ENCODE measurements at regions of chr7 and their contacts with region 1.

Region 1: DNA sequence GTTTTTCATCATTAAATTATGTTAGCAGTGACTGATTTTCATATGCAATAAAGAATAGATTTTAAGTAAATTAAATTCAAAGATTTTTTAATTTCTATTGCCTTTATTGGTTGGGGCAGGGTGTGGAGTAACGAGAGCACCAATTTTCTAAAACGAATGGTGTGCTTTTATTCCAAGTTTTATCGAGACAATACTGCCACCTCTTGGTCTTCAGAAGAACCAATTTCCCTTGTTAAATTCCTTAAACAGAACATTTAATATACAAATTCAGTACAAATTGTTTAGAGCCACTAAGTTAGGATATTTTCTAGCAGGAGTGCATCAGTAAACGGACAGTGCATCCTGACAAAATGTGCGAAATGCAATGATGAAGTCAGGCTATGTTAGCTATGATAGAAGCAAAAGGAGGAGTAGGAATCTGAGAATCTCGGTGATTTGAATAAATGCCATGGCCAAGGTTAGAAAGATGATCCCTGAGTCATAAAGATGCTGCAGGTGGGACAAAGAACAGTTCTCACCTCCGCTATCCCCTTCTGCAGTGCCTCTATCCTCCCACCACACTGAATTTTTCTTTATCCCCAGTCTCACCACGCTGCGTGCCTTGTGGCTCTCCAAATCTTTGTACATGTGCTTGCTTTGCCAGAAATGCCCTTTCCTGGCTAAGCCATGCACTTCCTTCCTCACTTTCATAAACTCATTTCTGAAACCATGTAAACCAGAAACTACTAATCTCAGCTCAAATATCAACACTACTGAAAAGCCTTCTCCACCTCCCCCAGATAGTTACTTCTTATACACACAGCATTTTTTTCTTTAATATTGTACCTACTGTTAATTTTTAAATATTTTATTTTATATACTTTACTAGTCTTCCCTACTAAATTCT is 31.9 kb upstream of the AGBL3 start:
- DNase-seq: peak; percentile 15
- ATAC-seq: peak; percentile 83
- H3K4me3 ChIP-seq: no peak overlapping the region
- H3K27ac ChIP-seq: no peak overlapping the region
- H3K4me1 ChIP-seq: no peaks in the 10 kb centered on the region; the same call in 1 of the 2 replicates
- H3K27me3 ChIP-seq: no peaks in the 10 kb centered on the region
- CTCF ChIP-seq: peak; percentile 49 to 64 (median 58)
- EP300 ChIP-seq: no peak
- POLR2A ChIP-seq: no peak
- RAD21 ChIP-seq: peak; percentile 72

Region 2: GRCh38 chr7:134502463-134503371 is 451.7 kb before region 1 on chr7:
- CTCF ChIA-PET with region 1: no interaction called
- POLR2A ChIA-PET with region 1: no interaction called
- RAD21 ChIA-PET with region 1: no interaction called
- SMC1A ChIA-PET with region 1: no interaction called
- in situ Hi-C with region 1: no loop called
- intact Hi-C with region 1: no loop called
- DNase-seq: no peak
- ATAC-seq: no peak
- H3K4me3 ChIP-seq: no peak overlapping the region
- H3K27ac ChIP-seq: no peak overlapping the region
- H3K4me1 ChIP-seq: no peaks in the 10 kb centered on the region
- H3K27me3 ChIP-seq: no peaks in the 10 kb centered on the region; a peak in 1 of 4 replicates
- CTCF ChIP-seq: no peak
- EP300 ChIP-seq: no peak
- POLR2A ChIP-seq: no peak
- RAD21 ChIP-seq: no peak

Region 3: DNA sequence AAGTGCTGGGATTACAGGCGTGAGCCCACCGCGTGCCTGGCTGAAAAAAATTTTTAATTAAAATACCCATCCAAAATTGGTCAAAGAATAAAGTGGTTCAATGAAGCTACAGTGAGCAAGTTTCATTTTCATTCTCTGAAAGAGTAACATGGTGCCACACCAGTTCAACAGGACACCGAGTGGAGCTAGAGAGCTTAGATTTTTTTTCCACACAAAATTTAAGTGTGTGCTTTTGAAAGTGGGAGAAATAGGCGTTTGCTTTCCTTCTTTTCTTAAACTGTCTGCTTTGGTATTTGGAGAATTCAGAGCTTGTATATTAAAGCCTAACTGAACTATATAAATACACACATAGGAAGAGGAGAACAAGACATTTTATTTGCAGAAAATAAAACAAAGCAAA is 264.4 kb before region 1 on chr7:
- CTCF ChIA-PET with region 1: interaction called, 10 read pairs
- POLR2A ChIA-PET with region 1: no interaction called
- RAD21 ChIA-PET with region 1: interaction called, 5 read pairs
- SMC1A ChIA-PET with region 1: interaction called, 6 read pairs
- in situ Hi-C with region 1: no loop called
- intact Hi-C with region 1: no loop called
- DNase-seq: no peak
- ATAC-seq: peak; percentile 75
- H3K4me3 ChIP-seq: no peak overlapping the region
- H3K27ac ChIP-seq: no peak overlapping the region
- H3K4me1 ChIP-seq: no peaks in the 10 kb centered on the region
- H3K27me3 ChIP-seq: peaks cover 0 to 2% of the 10 kb centered on the region in 2 experiments; a peak in 1 of 4 replicates
- CTCF ChIP-seq: peak in 1 of 3 experiments; percentile 10; a peak in 1 of 6 replicates
- EP300 ChIP-seq: no peak
- POLR2A ChIP-seq: no peak
- RAD21 ChIP-seq: peak; percentile 41

Region 4: DNA sequence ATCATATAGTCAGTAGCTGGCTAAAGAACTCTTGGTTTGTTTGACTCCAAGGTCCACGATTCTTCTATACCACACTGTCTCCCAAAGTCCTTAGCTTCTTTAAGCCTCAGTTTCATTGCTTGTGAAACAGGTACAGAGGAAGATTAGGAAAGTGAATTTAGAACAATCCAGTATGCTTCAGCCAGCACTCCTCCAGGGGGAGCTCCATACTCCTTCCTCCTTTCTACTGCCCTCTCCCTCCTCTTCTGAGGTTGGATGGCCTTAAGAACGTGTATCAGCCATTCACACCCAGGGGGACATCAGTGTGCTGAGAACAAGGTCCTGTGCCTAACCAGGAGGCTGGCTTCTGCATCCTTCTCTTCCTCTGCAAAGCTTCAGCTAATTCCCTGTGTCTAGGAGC is 229.8 kb before region 1 on chr7:
- CTCF ChIA-PET with region 1: interaction called, 23 read pairs
- POLR2A ChIA-PET with region 1: no interaction called
- RAD21 ChIA-PET with region 1: interaction called, 7 read pairs
- SMC1A ChIA-PET with region 1: interaction called, 4 read pairs
- in situ Hi-C with region 1: no loop called
- intact Hi-C with region 1: no loop called
- DNase-seq: peak; percentile 11
- ATAC-seq: peak; percentile 85
- H3K4me3 ChIP-seq: no peak overlapping the region
- H3K27ac ChIP-seq: no peak overlapping the region
- H3K4me1 ChIP-seq: no peaks in the 10 kb centered on the region
- H3K27me3 ChIP-seq: no peaks in the 10 kb centered on the region; a peak in 1 of 4 replicates
- CTCF ChIP-seq: peak; percentile 48 to 59 (median 52); a peak in 5 of 6 replicates
- EP300 ChIP-seq: no peak
- POLR2A ChIP-seq: no peak
- RAD21 ChIP-seq: peak; percentile 52

Region 5: GRCh38 chr7:134823400-134823799 is 131.0 kb before region 1 on chr7:
- CTCF ChIA-PET with region 1: no interaction called
- POLR2A ChIA-PET with region 1: no interaction called
- RAD21 ChIA-PET with region 1: no interaction called
- SMC1A ChIA-PET with region 1: no interaction called
- in situ Hi-C with region 1: no loop called
- intact Hi-C with region 1: no loop called
- DNase-seq: no peak
- ATAC-seq: no peak
- H3K4me3 ChIP-seq: no peak overlapping the region
- H3K27ac ChIP-seq: no peak overlapping the region
- H3K4me1 ChIP-seq: no peaks in the 10 kb centered on the region
- H3K27me3 ChIP-seq: no peaks in the 10 kb centered on the region
- CTCF ChIP-seq: no peak
- EP300 ChIP-seq: no peak
- POLR2A ChIP-seq: no peak
- RAD21 ChIP-seq: no peak

Region 6: DNA sequence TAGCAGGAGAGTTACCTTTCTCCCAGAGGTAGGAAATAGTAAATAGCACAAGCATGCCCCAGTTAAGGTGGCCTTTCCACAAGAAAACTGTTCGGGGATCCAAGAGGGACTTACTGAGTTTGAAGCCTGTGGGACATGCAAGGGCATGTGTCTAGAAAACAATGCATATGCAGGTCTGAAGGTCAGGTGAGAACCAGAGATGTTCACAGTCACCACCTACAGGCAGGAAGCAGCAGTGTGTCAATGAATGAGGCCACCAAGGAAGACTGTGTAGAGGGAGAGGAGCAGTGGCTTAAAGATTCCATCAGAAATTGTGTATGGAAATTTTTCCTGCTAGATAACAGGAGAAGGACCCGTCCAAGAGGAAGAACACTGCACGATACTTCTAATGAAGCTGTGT is 109.0 kb before region 1 on chr7:
- CTCF ChIA-PET with region 1: no interaction called
- POLR2A ChIA-PET with region 1: no interaction called
- RAD21 ChIA-PET with region 1: no interaction called
- SMC1A ChIA-PET with region 1: no interaction called
- in situ Hi-C with region 1: no loop called
- intact Hi-C with region 1: no loop called
- DNase-seq: peak; percentile 7
- ATAC-seq: peak; percentile 68
- H3K4me3 ChIP-seq: no peak overlapping the region
- H3K27ac ChIP-seq: no peak overlapping the region
- H3K4me1 ChIP-seq: no peaks in the 10 kb centered on the region
- H3K27me3 ChIP-seq: no peaks in the 10 kb centered on the region; a peak in 1 of 4 replicates
- CTCF ChIP-seq: peak; percentile 20 to 52 (median 46); a peak in 5 of 6 replicates
- EP300 ChIP-seq: no peak
- POLR2A ChIP-seq: no peak
- RAD21 ChIP-seq: peak; percentile 41

Region 7: DNA sequence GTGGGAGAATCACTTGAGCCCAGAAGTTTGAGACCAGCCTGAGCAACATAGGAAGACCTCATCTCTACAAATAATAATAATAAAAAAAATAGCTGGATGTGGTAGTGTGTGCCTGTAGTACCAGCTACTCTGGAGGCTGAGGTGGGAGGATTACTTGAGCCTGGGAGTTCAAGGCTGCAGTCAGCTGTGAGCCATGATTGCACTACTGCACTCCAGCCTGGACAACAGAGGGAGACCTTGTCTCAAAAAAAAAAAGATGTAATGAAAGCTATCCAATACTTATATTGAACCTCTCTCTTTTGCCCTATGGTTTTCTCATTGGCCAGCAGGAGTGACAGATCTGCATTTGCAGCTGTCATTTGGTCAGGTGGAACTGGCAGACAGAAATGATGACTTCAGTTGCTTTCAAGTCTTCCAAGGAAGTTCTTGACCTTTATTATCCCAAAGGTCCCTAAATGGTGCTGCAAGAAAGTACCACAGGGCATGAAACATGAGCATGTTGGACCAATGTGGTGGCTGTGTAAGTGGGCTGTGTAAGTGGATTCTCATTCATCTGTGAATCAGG is 75.6 kb before region 1 on chr7:
- CTCF ChIA-PET with region 1: interaction called, 12 read pairs
- POLR2A ChIA-PET with region 1: no interaction called
- RAD21 ChIA-PET with region 1: interaction called, 8 read pairs
- SMC1A ChIA-PET with region 1: interaction called, 14 read pairs
- in situ Hi-C with region 1: no loop called
- intact Hi-C with region 1: no loop called
- DNase-seq: no peak
- ATAC-seq: peak; percentile 66
- H3K4me3 ChIP-seq: no peak overlapping the region
- H3K27ac ChIP-seq: no peak overlapping the region
- H3K4me1 ChIP-seq: no peaks in the 10 kb centered on the region
- H3K27me3 ChIP-seq: peaks cover 0 to 3% of the 10 kb centered on the region in 2 experiments; a peak in 2 of 4 replicates
- CTCF ChIP-seq: peak in 1 of 3 experiments; percentile 27; a peak in 1 of 6 replicates
- EP300 ChIP-seq: no peak
- POLR2A ChIP-seq: no peak
- RAD21 ChIP-seq: peak; percentile 43; the same call in 1 of the 2 replicates

Region 8: GRCh38 chr7:134891262-134891695 is 63.2 kb before region 1 on chr7:
- CTCF ChIA-PET with region 1: no interaction called
- POLR2A ChIA-PET with region 1: no interaction called
- RAD21 ChIA-PET with region 1: no interaction called
- SMC1A ChIA-PET with region 1: no interaction called
- in situ Hi-C with region 1: no loop called
- intact Hi-C with region 1: no loop called
- DNase-seq: no peak
- ATAC-seq: peak; percentile 56
- H3K4me3 ChIP-seq: no peak overlapping the region
- H3K27ac ChIP-seq: no peak overlapping the region
- H3K4me1 ChIP-seq: no peaks in the 10 kb centered on the region; the same call in 1 of the 2 replicates
- H3K27me3 ChIP-seq: no peaks in the 10 kb centered on the region
- CTCF ChIP-seq: no peak
- EP300 ChIP-seq: no peak
- POLR2A ChIP-seq: no peak
- RAD21 ChIP-seq: no peak